ENCODE measurements at regions of chr2 and their contacts with region 1.

Region 1: DNA sequence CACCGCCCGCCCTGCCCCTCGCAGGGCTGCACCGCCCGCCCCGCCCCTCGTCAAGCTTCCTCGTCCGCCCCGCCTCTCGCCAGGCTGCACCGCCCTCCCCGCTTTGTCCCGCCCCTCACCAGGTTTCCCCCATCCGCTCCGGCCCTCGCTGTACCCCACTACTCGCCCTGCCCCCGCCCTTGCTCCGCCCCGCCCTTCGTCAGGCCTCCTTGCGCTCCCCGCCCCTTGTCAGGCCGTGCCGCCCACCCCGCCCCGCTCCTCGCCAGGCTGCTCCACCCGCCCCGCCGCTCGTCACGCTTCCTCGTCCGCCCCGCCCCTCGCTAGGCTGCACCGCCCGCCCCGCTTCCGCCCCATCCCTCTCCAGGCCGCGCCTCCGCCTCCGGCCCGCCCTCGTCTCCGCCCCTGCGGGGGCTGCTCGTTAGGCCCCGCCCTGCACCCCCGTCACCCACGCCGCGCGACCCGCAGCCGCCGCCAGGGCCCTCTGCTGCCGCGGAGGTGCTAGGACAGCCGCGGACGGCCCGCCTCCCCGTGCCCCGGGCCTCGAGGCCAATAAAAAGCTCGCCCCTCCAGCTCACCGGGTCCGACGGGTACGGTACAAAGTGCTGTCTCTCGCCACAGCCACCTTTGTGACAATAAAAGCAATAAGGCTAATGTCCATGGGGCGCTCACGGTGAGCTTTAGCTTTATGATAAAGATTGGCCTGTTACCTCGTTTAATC is 574 bp upstream of the DNPEP start:
- DNase-seq: peak; percentile 98
- H3K4me3 Mint-ChIP-seq: peak overlapping the region; percentile 90
- H3K27ac Mint-ChIP-seq: peak overlapping the region; percentile 59
- H3K4me1 Mint-ChIP-seq: peaks cover 23% of the 10 kb centered on the region
- H3K27me3 Mint-ChIP-seq: no peaks in the 10 kb centered on the region

Region 2: GRCh38 chr2:217972490-217972889 is 1415.8 kb before region 1 on chr2:
- CTCF ChIA-PET with region 1: no interaction called
- intact Hi-C with region 1: no loop called
- DNase-seq: no peak
- H3K4me3 Mint-ChIP-seq: no peak overlapping the region
- H3K27ac Mint-ChIP-seq: no peak overlapping the region
- H3K4me1 Mint-ChIP-seq: no peaks in the 10 kb centered on the region
- H3K27me3 Mint-ChIP-seq: peaks cover 6% of the 10 kb centered on the region

Region 3: DNA sequence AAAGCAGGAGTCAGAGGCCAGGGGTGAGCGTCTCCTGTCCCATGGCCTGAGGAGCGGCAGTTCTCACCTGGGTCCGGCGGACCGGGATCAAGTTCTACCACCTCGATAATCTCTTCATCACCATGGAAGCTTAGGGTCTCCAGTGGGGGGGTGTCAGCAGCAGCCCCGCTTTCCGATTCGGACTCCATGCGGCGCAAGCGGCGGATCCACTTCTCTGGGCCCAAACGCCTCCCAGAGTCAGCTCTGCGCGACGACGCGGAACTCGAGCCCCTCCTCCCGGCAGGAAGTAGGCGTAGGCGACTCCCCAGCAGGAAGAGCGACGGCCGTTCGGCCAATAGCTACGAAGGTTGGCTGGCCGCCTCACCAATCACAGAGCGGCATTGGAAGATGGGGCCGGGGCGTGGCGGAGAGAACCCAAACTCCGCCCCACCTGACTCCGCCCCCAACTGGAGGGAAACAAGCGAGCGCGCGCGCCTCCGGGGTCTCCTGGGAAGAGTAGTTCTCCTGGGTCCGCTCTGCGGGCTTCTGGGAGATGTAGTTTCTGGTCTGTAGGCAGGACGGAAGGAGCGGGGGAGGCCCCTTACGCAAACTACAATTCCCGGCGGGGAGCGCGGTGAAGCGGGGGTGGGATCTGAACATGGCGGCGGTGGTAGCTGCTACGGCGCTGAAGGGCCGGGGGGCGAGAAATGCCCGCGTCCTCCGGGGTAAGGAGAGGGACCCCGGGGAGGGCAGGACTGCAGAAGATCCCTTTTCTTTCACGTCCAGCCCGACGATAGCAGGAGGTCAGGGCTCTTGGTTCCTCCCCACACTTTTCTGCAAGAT is 1118.2 kb before region 1 on chr2 and contains the starts of genes AAMP and PNKD:
- CTCF ChIA-PET with region 1: no interaction called
- intact Hi-C with region 1: loop called (anchors 1 kb)
- DNase-seq: peak; percentile 100
- H3K4me3 Mint-ChIP-seq: peak within 1 kb of the TSS; percentile 80
- H3K27ac Mint-ChIP-seq: peak within 1 kb of the TSS; percentile 87
- H3K4me1 Mint-ChIP-seq: peaks cover 42% of the 10 kb centered on the region
- H3K27me3 Mint-ChIP-seq: no peaks in the 10 kb centered on the region
- total RNA-seq, gene AAMP: 58.7 to 59.4 TPM
- total RNA-seq, gene PNKD: 20.4 to 21.4 TPM

Region 4: GRCh38 chr2:218710687-218711549 is 677.4 kb before region 1 on chr2 and contains the start of gene TTLL4:
- CTCF ChIA-PET with region 1: no interaction called
- intact Hi-C with region 1: loop called (anchors 1 kb)
- DNase-seq: peak; percentile 99
- H3K4me3 Mint-ChIP-seq: peak within 1 kb of the TSS; percentile 98
- H3K27ac Mint-ChIP-seq: peak within 1 kb of the TSS; percentile 80
- H3K4me1 Mint-ChIP-seq: peaks cover 15% of the 10 kb centered on the region
- H3K27me3 Mint-ChIP-seq: peaks cover 3% of the 10 kb centered on the region
- total RNA-seq, gene TTLL4: 23.7 to 24.7 TPM

Region 5: GRCh38 chr2:219177552-219178376 is 210.5 kb before region 1 on chr2 and contains the start of gene RETREG2:
- CTCF ChIA-PET with region 1: interaction called, 3 read pairs
- intact Hi-C with region 1: loop called (anchors 1 kb)
- DNase-seq: peak; percentile 78
- H3K4me3 Mint-ChIP-seq: peak within 1 kb of the TSS; percentile 94
- H3K27ac Mint-ChIP-seq: peak within 1 kb of the TSS; percentile 98
- H3K4me1 Mint-ChIP-seq: peaks cover 58% of the 10 kb centered on the region
- H3K27me3 Mint-ChIP-seq: no peaks in the 10 kb centered on the region
- total RNA-seq, gene RETREG2: 44.0 to 44.1 TPM

Region 6: GRCh38 chr2:219253753-219254590 is 134.3 kb before region 1 on chr2 and contains the start of gene TUBA4A:
- CTCF ChIA-PET with region 1: no interaction called
- intact Hi-C with region 1: loop called (anchors 1 kb)
- DNase-seq: peak; percentile 89
- H3K4me3 Mint-ChIP-seq: peak within 1 kb of the TSS; percentile 70
- H3K27ac Mint-ChIP-seq: peak within 1 kb of the TSS; percentile 95
- H3K4me1 Mint-ChIP-seq: peaks cover 49% of the 10 kb centered on the region
- H3K27me3 Mint-ChIP-seq: no peaks in the 10 kb centered on the region
- total RNA-seq, gene TUBA4A: 112 to 116 TPM

Region 7: DNA sequence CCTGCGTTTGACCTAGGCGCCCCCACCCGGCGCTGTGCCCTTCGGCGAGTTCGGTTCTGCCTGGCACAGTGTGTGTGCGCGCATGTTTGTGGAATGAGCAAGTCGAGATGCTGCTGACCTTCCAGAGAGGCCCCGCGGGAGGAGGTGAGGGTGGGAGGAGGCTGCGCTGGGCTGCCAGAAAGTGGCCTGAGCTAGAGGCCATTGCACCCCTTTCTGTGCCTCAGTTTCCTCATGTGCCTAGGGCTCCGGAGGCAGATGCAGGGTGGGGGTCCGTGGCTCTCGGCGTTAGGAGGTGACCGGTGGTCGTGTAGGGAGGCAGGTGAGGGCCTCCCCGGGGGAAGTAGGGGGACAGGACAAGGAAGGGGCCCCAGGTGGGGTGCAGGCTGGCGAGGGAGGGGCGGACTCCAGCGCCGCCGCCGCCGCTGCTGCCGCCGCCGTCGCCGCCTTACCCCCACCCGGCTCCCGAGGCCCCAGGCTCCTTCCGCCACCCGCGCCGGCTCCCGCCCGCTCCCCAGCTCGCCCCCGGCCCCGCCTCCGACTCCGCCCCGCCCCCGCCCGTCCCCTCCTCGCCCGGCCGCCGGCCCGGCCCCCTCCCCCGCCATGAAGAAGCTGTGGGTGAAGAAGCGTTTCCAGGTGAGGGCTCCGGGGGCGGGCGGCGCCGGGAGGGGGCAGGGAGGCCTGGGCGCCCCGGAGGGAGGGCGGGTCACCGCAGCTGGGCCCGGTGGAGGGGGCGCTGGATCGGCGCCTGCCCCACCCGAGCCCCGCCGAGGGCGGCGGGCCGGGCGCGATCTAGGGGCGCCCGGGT is 53.4 kb after region 1 on chr2:
- CTCF ChIA-PET with region 1: interaction called, 4 read pairs
- intact Hi-C with region 1: loop called (anchors 2 kb)
- DNase-seq: peak; percentile 65
- H3K4me3 Mint-ChIP-seq: peak overlapping the region; percentile 65
- H3K27ac Mint-ChIP-seq: no peak overlapping the region
- H3K4me1 Mint-ChIP-seq: peaks cover 12% of the 10 kb centered on the region
- H3K27me3 Mint-ChIP-seq: peaks cover 6% of the 10 kb centered on the region

Region 8: GRCh38 chr2:219552382-219553167 is 164.3 kb after region 1 on chr2:
- CTCF ChIA-PET with region 1: no interaction called
- intact Hi-C with region 1: loop called (anchors 1 kb)
- DNase-seq: peak; percentile 82
- H3K4me3 Mint-ChIP-seq: peak overlapping the region; percentile 76
- H3K27ac Mint-ChIP-seq: no peak overlapping the region
- H3K4me1 Mint-ChIP-seq: peaks cover 8% of the 10 kb centered on the region
- H3K27me3 Mint-ChIP-seq: peaks cover 31% of the 10 kb centered on the region

Region 9: GRCh38 chr2:219619235-219619634 is 230.9 kb after region 1 on chr2:
- CTCF ChIA-PET with region 1: no interaction called
- intact Hi-C with region 1: no loop called
- DNase-seq: no peak
- H3K4me3 Mint-ChIP-seq: no peak overlapping the region
- H3K27ac Mint-ChIP-seq: no peak overlapping the region
- H3K4me1 Mint-ChIP-seq: no peaks in the 10 kb centered on the region
- H3K27me3 Mint-ChIP-seq: peaks cover 2% of the 10 kb centered on the region

Region 10: GRCh38 chr2:219671279-219671678 is 283.0 kb after region 1 on chr2:
- CTCF ChIA-PET with region 1: no interaction called
- intact Hi-C with region 1: no loop called
- DNase-seq: no peak
- H3K4me3 Mint-ChIP-seq: no peak overlapping the region
- H3K27ac Mint-ChIP-seq: no peak overlapping the region
- H3K4me1 Mint-ChIP-seq: no peaks in the 10 kb centered on the region
- H3K27me3 Mint-ChIP-seq: peaks cover 10% of the 10 kb centered on the region

Measured in activated naive CD4-positive, alpha-beta T cell treated with anti-CD3 and anti-CD28 coated beads for 36 hours (primary cell).